ENCODE measurements at regions of chrX and their contacts with region 1.

Region 1: DNA sequence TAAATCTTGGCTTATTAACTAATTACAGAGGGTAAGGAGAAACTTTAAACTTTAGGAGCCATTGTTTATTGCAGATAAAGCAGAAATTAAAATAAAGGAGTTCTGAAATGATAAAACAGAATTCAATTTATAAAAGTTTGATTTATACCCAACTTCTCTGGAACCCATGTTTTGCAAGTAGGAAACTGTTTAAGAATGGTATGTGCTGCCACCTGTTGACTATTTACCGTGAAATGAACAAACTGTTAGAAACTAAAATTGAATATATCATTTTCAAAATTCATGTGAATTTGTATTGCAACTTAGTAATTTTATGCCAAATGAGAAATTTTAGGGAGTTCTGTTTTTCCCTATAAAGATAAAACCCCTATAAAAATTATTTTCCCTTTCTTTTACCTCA is 11.0 kb upstream of the TBC1D8B start:
- DNase-seq: no peak
- H3K4me3 Mint-ChIP-seq: no peak overlapping the region
- H3K27ac Mint-ChIP-seq: no peak overlapping the region
- H3K4me1 Mint-ChIP-seq: no peaks in the 10 kb centered on the region
- H3K27me3 Mint-ChIP-seq: no peaks in the 10 kb centered on the region

Region 2: DNA sequence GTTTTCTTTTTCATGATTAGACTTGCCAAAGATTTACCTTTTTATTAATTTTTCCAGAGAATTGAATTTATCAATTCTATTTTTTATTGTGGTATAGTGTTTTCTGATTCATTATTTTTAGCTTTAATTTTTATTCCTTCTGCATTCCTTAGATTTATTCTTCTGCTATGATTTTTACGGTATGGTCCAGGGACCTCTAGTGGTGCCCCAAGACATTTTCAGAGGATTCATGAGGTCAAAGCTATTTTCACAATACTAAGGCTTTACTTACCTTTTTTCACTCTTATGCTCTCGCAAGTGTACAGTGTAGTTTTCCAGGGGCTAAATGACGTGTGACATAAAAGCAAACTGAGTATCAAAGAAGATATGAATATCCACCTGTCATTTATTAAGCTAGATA is 171.7 kb before region 1 on chrX:
- CTCF ChIA-PET with region 1: no interaction called
- POLR2A ChIA-PET with region 1: no interaction called
- intact Hi-C with region 1: loop called (anchors 2 kb)
- DNase-seq: no peak
- H3K4me3 Mint-ChIP-seq: no peak overlapping the region
- H3K27ac Mint-ChIP-seq: no peak overlapping the region
- H3K4me1 Mint-ChIP-seq: peaks cover 9% of the 10 kb centered on the region
- H3K27me3 Mint-ChIP-seq: no peaks in the 10 kb centered on the region

Region 3: DNA sequence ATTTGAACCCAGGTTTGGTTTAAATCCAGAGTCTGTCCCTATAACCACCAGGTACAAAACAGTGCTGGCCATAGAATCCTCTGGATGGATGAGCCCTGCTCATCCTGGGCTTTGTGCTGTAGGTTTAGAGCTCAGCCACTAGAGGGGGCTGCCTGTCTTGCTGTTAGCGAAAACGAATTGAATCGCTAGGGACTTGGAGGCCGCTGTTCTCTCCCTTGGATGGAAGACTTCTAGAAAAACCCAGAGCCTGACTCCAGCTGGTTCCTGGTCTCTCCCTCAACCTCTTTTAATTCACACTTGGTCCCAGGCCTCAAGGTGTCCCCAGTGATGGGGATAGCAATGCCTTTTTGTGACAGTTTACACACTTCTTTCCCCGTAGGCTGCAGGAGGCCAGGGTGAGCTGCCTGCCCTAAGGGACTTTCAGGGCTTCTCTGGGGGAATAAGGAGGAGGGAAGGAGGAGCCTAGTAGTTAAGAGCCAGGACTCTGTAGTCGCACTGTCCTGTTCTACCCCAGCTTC is 103.0 kb after region 1 on chrX:
- CTCF ChIA-PET with region 1: no interaction called
- POLR2A ChIA-PET with region 1: no interaction called
- intact Hi-C with region 1: no loop called
- DNase-seq: peak; percentile 54
- H3K4me3 Mint-ChIP-seq: no peak overlapping the region
- H3K27ac Mint-ChIP-seq: no peak overlapping the region
- H3K4me1 Mint-ChIP-seq: no peaks in the 10 kb centered on the region
- H3K27me3 Mint-ChIP-seq: no peaks in the 10 kb centered on the region

Measured in activated CD4-positive, alpha-beta memory T cell treated with anti-CD3 and anti-CD28 coated beads for 36 hours (primary cell).